ENCODE measurements at regions of chr6 and their contacts with region 1.

Region 1: DNA sequence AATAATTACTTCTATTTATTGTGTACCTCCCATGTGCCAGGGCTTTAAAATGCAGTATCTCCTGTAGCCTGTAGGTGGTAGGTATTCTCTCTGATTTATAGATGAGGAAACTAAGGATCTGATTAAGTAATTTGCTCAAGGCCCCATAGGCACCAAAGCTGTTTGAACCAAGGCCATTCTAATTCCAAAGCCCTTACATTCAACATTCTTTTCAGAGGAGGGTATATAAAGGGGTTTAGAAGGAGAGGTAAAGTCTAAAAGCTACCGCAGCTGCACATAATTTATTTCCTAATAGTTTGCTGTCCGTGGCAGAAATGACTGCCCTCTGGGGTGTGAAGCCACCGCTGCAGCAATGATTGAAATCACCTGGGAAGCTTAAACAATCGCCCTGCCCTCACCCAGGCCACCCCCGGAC is 95.0 kb upstream of the FAM8A1 start:
- H3K4me3 ChIP-seq: no peak overlapping the region
- H3K27ac ChIP-seq: no peak overlapping the region
- H3K4me1 ChIP-seq: no peaks in the 10 kb centered on the region
- CTCF ChIP-seq: no peak

Region 2: GRCh38 chr6:17454316-17455005 is 50.6 kb before region 1 on chr6:
- CTCF ChIA-PET with region 1: no interaction called
- POLR2A ChIA-PET with region 1: no interaction called
- H3K4me3 ChIP-seq: no peak overlapping the region
- H3K27ac ChIP-seq: no peak overlapping the region
- H3K4me1 ChIP-seq: peaks cover 11% of the 10 kb centered on the region
- CTCF ChIP-seq: no peak

Region 3: DNA sequence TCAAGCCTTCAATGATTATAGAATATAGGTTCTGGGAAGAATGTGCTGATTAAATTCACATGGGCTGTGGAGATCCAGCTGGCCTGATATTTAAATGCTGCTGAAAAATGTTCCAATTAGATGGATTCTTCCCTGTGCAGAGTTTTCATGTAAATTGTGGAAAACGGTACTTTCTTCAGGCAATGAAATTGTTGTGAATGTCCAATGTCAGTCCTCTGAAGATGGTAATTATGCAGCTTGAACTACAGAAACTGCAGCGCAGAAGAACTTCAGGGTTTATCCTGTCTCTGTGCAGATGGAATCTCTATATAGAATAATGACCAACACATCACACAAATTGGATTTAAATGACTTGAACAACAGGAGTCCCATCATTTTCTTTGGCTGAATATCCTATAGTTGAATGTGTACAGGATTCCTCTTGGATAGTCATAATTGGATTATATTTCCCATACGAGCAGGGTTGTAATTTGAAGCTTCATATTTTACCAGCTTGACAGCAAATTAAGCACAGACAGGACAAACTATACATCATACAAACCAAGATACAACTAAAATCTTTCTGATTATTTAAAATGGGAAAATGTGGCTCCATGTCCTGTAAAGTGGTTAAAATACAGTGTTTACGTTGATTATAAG is 29.3 kb before region 1 on chr6:
- CTCF ChIA-PET with region 1: no interaction called
- POLR2A ChIA-PET with region 1: no interaction called
- H3K4me3 ChIP-seq: no peak overlapping the region
- H3K27ac ChIP-seq: no peak overlapping the region
- H3K4me1 ChIP-seq: peaks cover 30% of the 10 kb centered on the region
- CTCF ChIP-seq: no peak

Region 4: DNA sequence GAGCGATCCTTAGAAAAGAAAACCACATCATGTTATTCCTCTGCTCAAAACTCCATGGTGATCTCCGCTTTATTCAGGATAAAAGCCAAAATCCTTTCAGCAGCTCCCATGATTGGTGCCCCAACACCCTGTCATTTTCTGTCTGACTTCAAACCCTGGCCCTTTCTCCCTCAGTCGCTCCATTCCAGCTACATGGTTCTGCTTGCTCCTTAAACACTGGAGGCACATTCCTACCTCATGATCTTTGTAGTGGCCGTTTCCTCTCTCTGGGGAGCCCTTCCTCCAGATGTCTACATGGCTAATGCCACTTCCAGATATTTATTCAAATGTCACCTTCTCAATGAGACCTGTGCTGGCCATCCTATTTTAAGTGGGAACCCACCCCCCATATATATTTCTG is 10.9 kb before region 1 on chr6:
- CTCF ChIA-PET with region 1: interaction called, 16 read pairs
- POLR2A ChIA-PET with region 1: no interaction called
- H3K4me3 ChIP-seq: no peak overlapping the region
- H3K27ac ChIP-seq: no peak overlapping the region
- H3K4me1 ChIP-seq: peaks cover 31% of the 10 kb centered on the region
- CTCF ChIP-seq: no peak

Measured in HEK293 (cell line).